ENCODE measurements at regions of chr20 and their contacts with region 1.

Region 1: GRCh38 chr20:56392282-56393137 is at the start of gene CSTF1:
- DNase-seq: peak; percentile 100
- H3K4me3 Mint-ChIP-seq: no peak within 1 kb of the TSS
- H3K27ac Mint-ChIP-seq: no peak within 1 kb of the TSS
- H3K4me1 Mint-ChIP-seq: peaks cover 36% of the 10 kb centered on the region
- H3K27me3 Mint-ChIP-seq: no peaks in the 10 kb centered on the region
- total RNA-seq, gene CSTF1: 53.9 to 56.6 TPM

Region 2: GRCh38 chr20:56373940-56374339 is 18.6 kb before region 1 on chr20:
- CTCF ChIA-PET with region 1: no interaction called
- POLR2A ChIA-PET with region 1: interaction called, 5 read pairs
- intact Hi-C with region 1: loop called (anchors 2 kb)
- DNase-seq: peak; percentile 32
- H3K4me3 Mint-ChIP-seq: no peak overlapping the region
- H3K27ac Mint-ChIP-seq: no peak overlapping the region
- H3K4me1 Mint-ChIP-seq: peaks cover 23% of the 10 kb centered on the region
- H3K27me3 Mint-ChIP-seq: no peaks in the 10 kb centered on the region

Region 3: DNA sequence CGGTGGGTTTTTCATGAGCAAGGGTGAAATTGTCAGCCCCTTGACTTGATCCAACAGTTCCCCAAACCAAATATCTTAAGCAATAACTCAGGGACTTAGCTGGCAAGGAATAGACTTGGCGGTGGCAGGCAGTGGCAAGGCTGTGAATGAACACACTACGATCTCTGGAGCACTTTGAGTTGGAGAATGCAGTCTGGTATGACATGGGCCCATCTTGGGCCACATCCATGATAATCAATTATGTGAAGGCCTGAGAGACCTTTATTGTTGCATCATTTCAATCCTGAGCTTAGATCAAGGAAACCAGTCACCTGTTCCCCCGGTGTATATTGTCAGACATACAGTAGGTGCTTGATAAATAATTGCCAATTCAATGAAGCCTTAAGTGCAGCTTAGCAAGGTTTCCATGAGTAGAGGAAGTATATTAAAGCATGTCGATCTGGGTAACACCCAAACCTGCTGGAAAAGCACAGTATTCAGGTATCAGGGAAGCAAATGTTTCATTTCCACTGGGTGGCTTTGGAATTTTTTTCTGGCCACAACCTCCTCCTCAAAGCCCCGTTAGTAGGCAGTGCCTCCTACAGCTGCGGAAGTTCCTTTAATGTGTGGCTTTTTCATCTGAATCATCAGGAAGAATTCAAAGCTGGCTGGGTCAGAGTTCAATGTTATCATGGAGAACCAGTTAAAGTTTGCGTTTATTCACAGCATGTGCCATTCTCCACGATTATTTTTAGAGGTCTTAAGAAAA is 29.7 kb after region 1 on chr20:
- CTCF ChIA-PET with region 1: interaction called, 10 read pairs
- POLR2A ChIA-PET with region 1: interaction called, 16 read pairs
- intact Hi-C with region 1: no loop called
- DNase-seq: no peak
- H3K4me3 Mint-ChIP-seq: peak overlapping the region; percentile 6
- H3K27ac Mint-ChIP-seq: peak overlapping the region; percentile 73
- H3K4me1 Mint-ChIP-seq: peaks cover 75% of the 10 kb centered on the region
- H3K27me3 Mint-ChIP-seq: no peaks in the 10 kb centered on the region

Region 4: GRCh38 chr20:56433221-56433879 is 40.8 kb after region 1 on chr20:
- CTCF ChIA-PET with region 1: no interaction called
- POLR2A ChIA-PET with region 1: no interaction called
- intact Hi-C with region 1: no loop called
- DNase-seq: no peak
- H3K4me3 Mint-ChIP-seq: peak overlapping the region; percentile 4
- H3K27ac Mint-ChIP-seq: peak overlapping the region; percentile 85
- H3K4me1 Mint-ChIP-seq: peaks cover 62% of the 10 kb centered on the region
- H3K27me3 Mint-ChIP-seq: no peaks in the 10 kb centered on the region

Region 5: GRCh38 chr20:56451072-56452032 is 58.8 kb after region 1 on chr20:
- CTCF ChIA-PET with region 1: no interaction called
- POLR2A ChIA-PET with region 1: no interaction called
- intact Hi-C with region 1: no loop called
- DNase-seq: no peak
- H3K4me3 Mint-ChIP-seq: no peak overlapping the region
- H3K27ac Mint-ChIP-seq: no peak overlapping the region
- H3K4me1 Mint-ChIP-seq: peaks cover 29% of the 10 kb centered on the region
- H3K27me3 Mint-ChIP-seq: no peaks in the 10 kb centered on the region

Region 6: GRCh38 chr20:56504373-56505005 is 112.0 kb after region 1 on chr20:
- CTCF ChIA-PET with region 1: interaction called, 5 read pairs
- POLR2A ChIA-PET with region 1: no interaction called
- intact Hi-C with region 1: loop called (anchors 2 kb)
- DNase-seq: peak; percentile 35
- H3K4me3 Mint-ChIP-seq: no peak overlapping the region
- H3K27ac Mint-ChIP-seq: no peak overlapping the region
- H3K4me1 Mint-ChIP-seq: peaks cover 2% of the 10 kb centered on the region
- H3K27me3 Mint-ChIP-seq: no peaks in the 10 kb centered on the region